ENCODE measurements at regions of chr10 and their contacts with region 1.

Region 1: DNA sequence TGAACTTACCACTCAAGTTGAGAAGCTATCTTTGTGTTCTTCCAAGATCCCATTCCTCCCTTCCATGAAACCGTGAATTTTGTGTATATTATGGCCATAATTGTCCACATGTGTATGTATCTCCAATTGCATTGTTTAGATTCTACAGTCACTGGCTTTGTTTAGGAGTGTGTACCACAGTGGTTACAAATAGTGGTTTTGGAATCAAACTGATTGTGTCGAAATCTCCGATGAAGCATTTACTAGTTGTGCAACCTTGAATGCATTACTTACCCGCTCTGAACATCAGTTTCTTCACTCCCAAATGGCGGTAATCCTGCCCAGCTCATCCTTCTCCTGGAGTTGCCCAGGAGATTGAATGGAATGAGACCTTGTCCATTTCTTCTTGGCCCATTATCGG is 145.0 kb upstream of the ZNF32 start:
- DNase-seq: peak; percentile 61
- H3K4me3 ChIP-seq: no peak overlapping the region
- H3K27ac ChIP-seq: no peak overlapping the region
- H3K27me3 ChIP-seq: peaks cover 2% of the 10 kb centered on the region
- CTCF ChIP-seq: no peak

Region 2: DNA sequence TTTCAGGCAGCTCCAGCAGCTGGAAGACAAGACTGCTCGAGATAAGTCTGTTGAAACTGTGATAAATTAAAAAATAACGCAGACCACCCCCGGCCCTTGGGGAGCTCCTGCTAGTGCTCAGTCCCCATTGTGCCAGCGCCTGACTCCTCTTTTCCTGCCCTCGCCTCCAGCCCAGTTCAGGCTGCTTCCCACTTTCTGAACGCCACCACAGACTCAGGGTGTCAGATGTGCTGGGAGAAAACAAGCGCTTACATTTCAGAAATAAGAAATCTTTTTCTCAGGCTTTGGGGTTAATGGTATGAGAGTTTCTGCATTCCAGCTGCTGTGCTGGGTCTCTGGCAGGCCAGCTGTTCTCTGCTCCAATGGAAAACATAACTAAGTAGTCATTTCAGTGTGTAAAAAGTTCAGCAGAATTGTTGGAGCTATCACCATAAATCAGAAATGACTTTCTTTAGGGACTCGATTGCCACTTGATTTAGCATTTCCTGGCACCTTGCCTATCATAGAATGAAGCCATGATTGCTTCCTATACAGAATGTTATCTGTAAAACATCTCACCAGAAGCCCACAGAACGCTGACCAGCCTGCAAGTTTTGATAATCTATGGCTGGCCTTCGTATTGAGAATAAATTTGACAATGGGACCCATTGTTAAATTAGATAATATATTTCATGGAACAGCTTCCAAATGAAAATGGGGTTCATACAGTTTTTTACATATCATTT is 112.0 kb after region 1 on chr10:
- CTCF ChIA-PET with region 1: interaction called, 4 read pairs
- POLR2A ChIA-PET with region 1: interaction called, 10 read pairs
- DNase-seq: no peak
- H3K4me3 ChIP-seq: no peak overlapping the region
- H3K27ac ChIP-seq: peak overlapping the region; percentile 70
- H3K27me3 ChIP-seq: no peaks in the 10 kb centered on the region
- CTCF ChIP-seq: no peak